Left lung (tissue), 14 donors: ENCODE measurements at regions of chr1 and their contacts with region 1.

Region 1: GRCh38 chr1:2044510-2045319 is 5.5 kb upstream of the PRKCZ start:
- DNase-seq: peak; percentile 62 to 94 (median 76)
- ATAC-seq: peak; percentile 75
- H3K4me3 ChIP-seq: no peak overlapping the region
- H3K27ac ChIP-seq: no peak overlapping the region
- H3K4me1 ChIP-seq: peaks cover 8 to 22% of the 10 kb centered on the region in 2 donors
- H3K27me3 ChIP-seq: peaks cover 9 to 68% of the 10 kb centered on the region in 2 donors
- CTCF ChIP-seq: peak; percentile 79 to 89

Region 2: DNA sequence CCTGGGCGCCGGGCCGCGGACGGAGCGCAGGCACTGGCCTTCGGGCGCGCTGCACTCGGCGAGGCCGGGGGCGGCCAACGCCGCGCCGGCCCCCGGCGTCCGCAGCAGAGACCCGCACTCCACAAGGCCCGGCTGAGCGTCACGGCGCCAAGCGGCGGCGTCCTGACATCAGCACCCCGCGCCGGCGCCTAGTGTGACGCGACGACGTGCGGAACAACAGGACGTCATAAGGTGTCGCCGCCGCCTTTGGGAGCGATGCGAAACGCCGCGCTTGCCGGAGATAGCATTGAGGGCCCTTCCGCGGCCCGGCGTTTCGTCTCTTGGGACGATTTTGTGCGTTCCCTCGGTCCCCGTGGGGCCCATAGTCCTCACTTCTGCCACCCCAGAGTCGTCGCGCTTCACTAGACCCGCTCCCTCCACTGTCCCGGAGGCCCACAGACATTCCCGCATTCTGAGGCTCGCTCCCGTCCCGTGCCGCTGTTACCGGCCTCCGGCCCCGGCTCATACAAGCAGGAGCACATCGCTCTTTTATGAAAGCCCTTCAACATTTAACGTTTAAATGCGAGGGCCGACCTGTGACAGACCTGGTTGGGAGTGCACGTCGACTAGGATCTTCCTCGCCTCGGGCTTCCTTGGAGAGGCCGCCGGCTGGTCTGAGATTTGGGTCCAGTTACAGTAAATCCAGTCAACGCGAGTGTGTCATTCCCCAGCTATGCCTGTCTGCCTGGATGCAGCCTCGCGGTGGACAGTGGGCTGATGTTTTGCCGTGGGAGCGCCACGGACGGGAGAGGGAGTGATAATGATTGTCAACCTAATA is 469.8 kb before region 1 on chr1 and contains the start of gene SSU72:
- intact Hi-C with region 1: no loop called
- DNase-seq: peak; percentile 92 to 95 (median 95)
- ATAC-seq: peak; percentile 91
- H3K4me3 ChIP-seq: peak within 1 kb of the TSS; percentile 98
- H3K27ac ChIP-seq: peak within 1 kb of the TSS; percentile 96 to 98
- H3K4me1 ChIP-seq: peaks cover 2 to 51% of the 10 kb centered on the region in 2 donors
- H3K27me3 ChIP-seq: peaks cover 0 to 14% of the 10 kb centered on the region in 2 donors
- CTCF ChIP-seq: no peak
- polyA plus RNA-seq, gene SSU72: 65.2 to 87.9 (median 69.2) TPM

Region 3: DNA sequence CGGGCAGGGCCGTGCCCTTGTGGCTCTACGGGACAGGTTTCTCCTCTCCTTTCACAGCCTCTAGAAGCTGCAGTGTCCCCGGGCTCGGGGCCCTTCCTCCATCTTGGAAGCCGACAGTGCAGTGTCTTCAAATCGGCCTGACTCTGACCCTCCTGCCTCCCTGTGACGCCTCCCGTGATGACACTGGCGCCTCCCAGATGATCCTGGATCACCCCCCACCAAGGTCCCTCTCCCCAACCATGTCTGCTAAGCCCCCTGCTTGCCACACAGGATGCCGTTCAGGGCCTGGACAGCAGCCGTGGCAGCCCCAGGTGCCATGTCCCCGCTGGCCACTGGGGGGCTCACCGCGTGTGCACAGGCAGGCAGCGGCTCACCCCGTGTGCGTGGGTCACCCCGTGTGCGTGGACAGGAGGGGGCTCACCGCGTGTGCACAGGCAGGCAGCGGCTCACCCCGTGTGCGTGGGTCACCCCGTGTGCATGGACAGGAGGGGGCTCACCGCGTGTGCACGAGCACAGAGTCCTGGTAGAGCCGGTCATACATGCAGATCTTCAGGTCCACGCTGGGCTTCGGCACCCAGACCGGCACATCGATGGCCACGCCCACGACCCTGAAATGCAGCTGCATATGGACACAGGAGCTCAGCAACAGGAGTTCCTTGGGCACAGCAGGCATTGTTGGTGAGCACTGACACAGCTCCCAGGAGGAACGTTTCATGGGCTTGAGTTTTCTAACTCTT is 100.7 kb before region 1 on chr1:
- intact Hi-C with region 1: loop called in 1 of 2 experiments (anchors 5 kb)
- DNase-seq: peak in 2 of 4 donors; percentile 44 to 89
- ATAC-seq: peak; percentile 91
- H3K4me3 ChIP-seq: no peak overlapping the region
- H3K27ac ChIP-seq: no peak overlapping the region
- H3K4me1 ChIP-seq: peaks cover 3 to 6% of the 10 kb centered on the region in 2 donors
- H3K27me3 ChIP-seq: peaks cover 0 to 30% of the 10 kb centered on the region in 2 donors
- CTCF ChIP-seq: peak; percentile 92 to 93

Region 4: GRCh38 chr1:1966071-1966740 is 78.5 kb before region 1 on chr1:
- intact Hi-C with region 1: loop called in 1 of 2 experiments (anchors 5 kb)
- DNase-seq: peak in 1 of 4 donors; percentile 71
- ATAC-seq: no peak
- H3K4me3 ChIP-seq: no peak overlapping the region
- H3K27ac ChIP-seq: no peak overlapping the region
- H3K4me1 ChIP-seq: no peaks in the 10 kb centered on the region
- H3K27me3 ChIP-seq: peaks cover 5 to 61% of the 10 kb centered on the region in 2 donors
- CTCF ChIP-seq: no peak